MCF 10A (cell line): ENCODE measurements at regions of chr21 and their contacts with region 1.

Region 1: GRCh38 chr21:38787461-38788274 is 18.1 kb upstream of the ETS2 start:
- DNase-seq: peak; percentile 97
- H3K4me3 Mint-ChIP-seq: peak overlapping the region; percentile 68
- H3K27ac Mint-ChIP-seq: peak overlapping the region; percentile 86
- H3K4me1 Mint-ChIP-seq: peaks cover 11% of the 10 kb centered on the region
- H3K27me3 Mint-ChIP-seq: no peaks in the 10 kb centered on the region
- CTCF ChIP-seq: no peak

Region 2: GRCh38 chr21:38755681-38756371 is 31.8 kb before region 1 on chr21:
- CTCF ChIA-PET with region 1: interaction called, 4 read pairs
- POLR2A ChIA-PET with region 1: interaction called, 47 read pairs
- intact Hi-C with region 1: no loop called
- DNase-seq: peak; percentile 90
- H3K4me3 Mint-ChIP-seq: peak overlapping the region; percentile 26
- H3K27ac Mint-ChIP-seq: peak overlapping the region; percentile 96
- H3K4me1 Mint-ChIP-seq: peaks cover 31% of the 10 kb centered on the region
- H3K27me3 Mint-ChIP-seq: no peaks in the 10 kb centered on the region
- CTCF ChIP-seq: no peak

Region 3: DNA sequence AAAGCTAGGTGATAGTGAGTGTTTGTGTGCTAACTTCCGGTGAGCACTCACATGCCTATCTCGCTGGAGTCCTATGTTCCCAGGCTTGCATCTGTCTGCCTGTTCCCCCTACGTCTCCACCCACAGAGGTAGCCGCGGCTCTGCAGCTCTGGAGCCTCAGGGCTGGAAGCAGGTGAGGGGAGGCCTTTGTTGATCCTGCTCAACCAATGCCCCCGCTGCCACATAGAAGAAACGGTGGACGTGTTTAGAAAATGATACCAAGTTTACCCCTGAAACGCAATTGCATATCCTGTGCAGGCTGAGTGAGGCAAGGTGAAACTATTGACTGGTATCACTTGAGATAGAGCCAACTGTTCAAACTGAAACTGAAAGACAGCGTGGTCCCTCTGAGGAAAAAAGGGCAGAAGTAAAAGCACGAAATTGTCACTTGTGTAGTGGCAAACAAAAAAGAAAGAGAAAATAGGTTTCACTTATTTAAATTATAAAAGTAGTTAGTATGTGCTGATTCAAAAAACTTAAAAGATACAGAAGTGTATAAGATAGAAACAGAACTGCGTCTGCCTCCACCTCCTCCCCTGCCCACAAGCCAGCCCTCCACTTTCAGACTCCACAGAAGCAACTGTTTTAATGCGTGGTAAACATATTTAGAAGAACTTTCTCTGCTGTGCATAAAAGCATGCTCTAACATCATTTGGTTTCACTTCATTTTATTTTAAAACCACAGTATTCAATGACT is 20.5 kb before region 1 on chr21:
- CTCF ChIA-PET with region 1: interaction called, 4 read pairs
- POLR2A ChIA-PET with region 1: interaction called, 14 read pairs
- intact Hi-C with region 1: no loop called
- DNase-seq: peak; percentile 34
- H3K4me3 Mint-ChIP-seq: peak overlapping the region; percentile 43
- H3K27ac Mint-ChIP-seq: peak overlapping the region; percentile 97
- H3K4me1 Mint-ChIP-seq: peaks cover 16% of the 10 kb centered on the region
- H3K27me3 Mint-ChIP-seq: no peaks in the 10 kb centered on the region
- CTCF ChIP-seq: no peak

Region 4: GRCh38 chr21:38773099-38774061 is 14.3 kb before region 1 on chr21:
- CTCF ChIA-PET with region 1: interaction called, 4 read pairs
- POLR2A ChIA-PET with region 1: interaction called, 40 read pairs
- intact Hi-C with region 1: no loop called
- DNase-seq: peak; percentile 92
- H3K4me3 Mint-ChIP-seq: peak overlapping the region; percentile 56
- H3K27ac Mint-ChIP-seq: peak overlapping the region; percentile 95
- H3K4me1 Mint-ChIP-seq: peaks cover 39% of the 10 kb centered on the region
- H3K27me3 Mint-ChIP-seq: no peaks in the 10 kb centered on the region
- CTCF ChIP-seq: no peak

Region 5: DNA sequence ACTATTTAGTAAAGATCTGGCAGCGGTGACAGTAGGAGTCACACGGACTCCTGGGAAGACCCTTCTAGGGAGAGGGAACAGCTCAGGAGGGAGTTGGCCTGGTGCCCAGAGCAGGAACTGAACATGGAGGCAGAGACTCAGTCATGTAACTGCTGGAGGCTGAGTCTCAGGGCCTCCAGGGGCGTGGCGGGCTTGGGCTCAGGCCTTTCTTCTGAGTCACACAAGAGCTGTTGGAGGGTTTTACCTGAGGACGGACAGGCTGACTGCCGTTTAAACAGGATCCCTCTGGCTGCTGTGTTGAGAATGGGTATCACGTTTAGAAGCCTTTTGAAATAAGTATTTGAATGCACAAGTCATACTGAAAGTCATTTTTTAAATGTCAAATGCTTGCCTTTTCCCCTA is 10.8 kb after region 1 on chr21:
- CTCF ChIA-PET with region 1: interaction called, 6 read pairs
- POLR2A ChIA-PET with region 1: interaction called, 107 read pairs
- intact Hi-C with region 1: no loop called
- DNase-seq: peak; percentile 93
- H3K4me3 Mint-ChIP-seq: peak overlapping the region; percentile 30
- H3K27ac Mint-ChIP-seq: peak overlapping the region; percentile 85
- H3K4me1 Mint-ChIP-seq: peaks cover 36% of the 10 kb centered on the region
- H3K27me3 Mint-ChIP-seq: no peaks in the 10 kb centered on the region
- CTCF ChIP-seq: no peak